IMR-90 (cell line): ENCODE measurements at regions of chr4 and their contacts with region 1.

Region 1: GRCh38 chr4:120922381-120923206 is at the start of gene PRDM5:
- DNase-seq: peak; percentile 40
- ATAC-seq: peak; percentile 75
- H3K4me3 ChIP-seq: peak within 1 kb of the TSS; percentile 49
- H3K27ac ChIP-seq: peak within 1 kb of the TSS; percentile 51
- H3K4me1 ChIP-seq: peaks cover 2% of the 10 kb centered on the region; the same call in 1 of the 2 replicates
- H3K27me3 ChIP-seq: no peaks in the 10 kb centered on the region
- CTCF ChIP-seq: no peak
- POLR2A ChIP-seq: no peak; the same call in 1 of the 2 replicates
- RAD21 ChIP-seq: no peak
- total RNA-seq, gene PRDM5: 10.8 and 12.8 TPM in 2 replicates

Region 2: GRCh38 chr4:120769227-120769626 is 153.4 kb before region 1 on chr4:
- CTCF ChIA-PET with region 1: no interaction called
- POLR2A ChIA-PET with region 1: no interaction called
- dilution Hi-C with region 1: no loop called
- in situ Hi-C with region 1: no loop called
- intact Hi-C with region 1: loop called (anchors 5 kb)
- DNase-seq: peak; percentile 96
- ATAC-seq: peak; percentile 91
- H3K4me3 ChIP-seq: no peak overlapping the region
- H3K27ac ChIP-seq: no peak overlapping the region
- H3K4me1 ChIP-seq: peaks cover 4% of the 10 kb centered on the region
- H3K27me3 ChIP-seq: no peaks in the 10 kb centered on the region
- CTCF ChIP-seq: no peak
- POLR2A ChIP-seq: no peak
- RAD21 ChIP-seq: no peak

Region 3: DNA sequence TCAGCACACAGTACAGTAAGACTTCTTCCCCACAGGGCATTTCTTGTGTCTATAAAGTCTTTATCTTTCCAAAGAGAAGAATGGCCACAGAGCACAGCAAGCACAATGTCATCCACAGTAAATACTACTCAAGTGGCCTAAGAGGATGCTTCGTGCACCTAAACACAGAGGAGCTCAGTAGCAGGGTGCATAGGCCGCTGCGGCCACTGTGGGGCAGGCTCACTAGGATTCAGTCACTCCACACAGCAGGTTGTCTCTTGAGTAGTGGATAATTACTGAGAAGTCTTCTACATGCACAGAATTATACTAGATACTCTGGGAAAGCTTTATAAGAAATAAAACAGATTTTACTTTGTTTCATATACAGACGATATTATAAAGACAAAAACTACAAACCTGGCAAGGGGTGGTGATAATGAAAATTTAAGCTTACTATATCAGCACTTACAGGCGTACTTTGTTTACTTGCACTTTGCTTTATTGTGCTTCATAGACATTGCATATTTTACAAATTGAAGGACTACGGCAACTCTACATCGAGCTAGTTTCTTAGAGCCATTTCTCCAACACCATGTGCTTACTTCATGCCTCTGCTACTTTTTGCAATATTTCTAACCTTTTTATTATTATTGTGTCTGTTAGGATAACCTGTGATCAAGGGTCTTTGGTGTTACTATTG is 78.6 kb before region 1 on chr4:
- CTCF ChIA-PET with region 1: no interaction called
- POLR2A ChIA-PET with region 1: no interaction called
- dilution Hi-C with region 1: no loop called
- in situ Hi-C with region 1: no loop called
- intact Hi-C with region 1: loop called (anchors 2 kb)
- DNase-seq: no peak
- ATAC-seq: no peak
- H3K4me3 ChIP-seq: no peak overlapping the region
- H3K27ac ChIP-seq: no peak overlapping the region
- H3K4me1 ChIP-seq: peaks cover 3% of the 10 kb centered on the region
- H3K27me3 ChIP-seq: no peaks in the 10 kb centered on the region
- CTCF ChIP-seq: 0 out of 2 replicates have a peak, but pooled peaks have one; percentile 1
- POLR2A ChIP-seq: no peak
- RAD21 ChIP-seq: no peak

Region 4: GRCh38 chr4:120864969-120865368 is 57.6 kb before region 1 on chr4:
- CTCF ChIA-PET with region 1: no interaction called
- POLR2A ChIA-PET with region 1: no interaction called
- dilution Hi-C with region 1: no loop called
- in situ Hi-C with region 1: loop called (anchors 5 kb)
- intact Hi-C with region 1: no loop called
- DNase-seq: no peak
- ATAC-seq: no peak
- H3K4me3 ChIP-seq: no peak overlapping the region
- H3K27ac ChIP-seq: no peak overlapping the region
- H3K4me1 ChIP-seq: peaks cover 4% of the 10 kb centered on the region; the same call in 1 of the 2 replicates
- H3K27me3 ChIP-seq: no peaks in the 10 kb centered on the region
- CTCF ChIP-seq: no peak
- POLR2A ChIP-seq: no peak
- RAD21 ChIP-seq: no peak